Right ventricle myocardium inferior (tissue), 1 donor: ENCODE measurements at regions of chr13 and their contacts with region 1.

Region 1: GRCh38 chr13:26019881-26020870 is 31.6 kb downstream of the SHISA2 start:
- DNase-seq: no peak
- ATAC-seq: no peak

Region 2: DNA sequence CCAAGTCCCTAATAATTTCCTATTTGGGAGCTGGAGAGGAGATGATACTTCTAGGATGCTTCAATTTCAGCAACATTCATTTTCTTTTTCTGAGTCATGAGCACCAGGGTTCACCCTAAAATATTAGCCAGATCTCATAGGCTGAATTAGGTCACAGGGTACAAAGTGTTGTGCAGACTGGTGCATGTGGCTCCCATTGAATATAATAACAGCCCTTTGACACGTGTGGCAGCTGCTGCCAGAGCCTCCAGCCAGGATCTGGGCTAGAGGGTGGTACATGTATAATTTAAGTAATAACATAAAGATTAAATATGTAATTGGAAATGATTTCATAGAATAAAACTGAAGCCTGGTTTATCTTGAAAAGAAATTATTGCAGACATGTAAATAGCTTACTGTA is 403.5 kb before region 1 on chr13:
- intact Hi-C with region 1: no loop called
- DNase-seq: no peak
- ATAC-seq: no peak

Region 3: GRCh38 chr13:26051657-26052311 is 31.6 kb after region 1 on chr13 and contains the start of gene SHISA2:
- intact Hi-C with region 1: loop called (anchors 5 kb)
- DNase-seq: no peak
- ATAC-seq: peak; percentile 85
- total RNA-seq, gene SHISA2: 0.22 TPM